Transverse colon (tissue), 4 donors: ENCODE measurements at regions of chr6 and their contacts with region 1.

Region 1: DNA sequence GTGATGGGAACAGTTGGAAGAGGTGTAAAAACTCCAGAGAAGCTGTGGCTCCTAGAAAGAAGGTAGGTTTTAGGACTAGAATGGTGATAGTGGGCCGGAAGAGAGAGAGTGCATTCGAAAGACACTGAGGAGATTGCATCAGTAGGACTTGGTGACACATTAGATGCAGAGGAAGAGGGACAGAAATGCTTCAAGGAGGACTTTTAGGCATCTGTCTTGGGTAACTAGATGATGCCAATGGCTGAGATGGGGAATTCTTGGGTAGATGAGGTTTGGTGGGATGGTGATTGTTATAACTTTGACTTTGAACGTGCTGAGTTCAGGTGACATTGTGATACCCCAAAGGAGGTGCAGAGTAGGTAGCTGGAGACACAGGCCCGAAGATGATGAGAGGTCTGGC is 196.5 kb downstream of the GMPR start:
- DNase-seq: no peak
- H3K4me3 ChIP-seq: no peak overlapping the region
- H3K27ac ChIP-seq: no peak overlapping the region
- H3K4me1 ChIP-seq: peaks cover 9 to 44% (median 14%) of the 10 kb centered on the region in 4 donors
- H3K27me3 ChIP-seq: no peaks in the 10 kb centered on the region
- CTCF ChIP-seq: no peak
- EP300 ChIP-seq: no peak
- POLR2A ChIP-seq: no peak

Region 2: DNA sequence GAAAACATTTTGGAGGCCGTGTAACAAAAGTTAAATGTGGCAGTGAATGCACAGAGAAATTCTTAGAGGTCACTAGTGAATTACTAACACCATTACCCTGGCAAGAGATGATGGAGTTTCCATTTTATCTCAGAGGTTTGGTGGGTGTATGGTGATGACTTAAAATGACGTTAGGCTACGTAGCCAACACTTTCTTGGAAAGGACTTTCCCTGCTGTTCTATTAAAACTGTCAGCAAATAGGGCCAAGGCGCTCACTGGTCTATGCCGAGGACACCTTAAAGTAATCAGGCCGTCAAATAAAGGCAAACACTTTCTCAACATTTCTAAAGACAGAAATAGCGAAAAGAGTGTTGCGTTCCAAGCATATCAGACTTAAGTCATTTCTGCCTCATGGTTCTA is 35.7 kb before region 1 on chr6:
- in situ Hi-C with region 1: no loop called
- intact Hi-C with region 1: loop called (anchors 1 kb)
- DNase-seq: no peak
- H3K4me3 ChIP-seq: no peak overlapping the region
- H3K27ac ChIP-seq: peak overlapping the region in 3 of 4 donors; percentile 47 to 59 (median 52)
- H3K4me1 ChIP-seq: peaks cover 3 to 23% (median 6%) of the 10 kb centered on the region in 4 donors
- H3K27me3 ChIP-seq: no peaks in the 10 kb centered on the region
- CTCF ChIP-seq: no peak
- EP300 ChIP-seq: no peak
- POLR2A ChIP-seq: no peak

Region 3: DNA sequence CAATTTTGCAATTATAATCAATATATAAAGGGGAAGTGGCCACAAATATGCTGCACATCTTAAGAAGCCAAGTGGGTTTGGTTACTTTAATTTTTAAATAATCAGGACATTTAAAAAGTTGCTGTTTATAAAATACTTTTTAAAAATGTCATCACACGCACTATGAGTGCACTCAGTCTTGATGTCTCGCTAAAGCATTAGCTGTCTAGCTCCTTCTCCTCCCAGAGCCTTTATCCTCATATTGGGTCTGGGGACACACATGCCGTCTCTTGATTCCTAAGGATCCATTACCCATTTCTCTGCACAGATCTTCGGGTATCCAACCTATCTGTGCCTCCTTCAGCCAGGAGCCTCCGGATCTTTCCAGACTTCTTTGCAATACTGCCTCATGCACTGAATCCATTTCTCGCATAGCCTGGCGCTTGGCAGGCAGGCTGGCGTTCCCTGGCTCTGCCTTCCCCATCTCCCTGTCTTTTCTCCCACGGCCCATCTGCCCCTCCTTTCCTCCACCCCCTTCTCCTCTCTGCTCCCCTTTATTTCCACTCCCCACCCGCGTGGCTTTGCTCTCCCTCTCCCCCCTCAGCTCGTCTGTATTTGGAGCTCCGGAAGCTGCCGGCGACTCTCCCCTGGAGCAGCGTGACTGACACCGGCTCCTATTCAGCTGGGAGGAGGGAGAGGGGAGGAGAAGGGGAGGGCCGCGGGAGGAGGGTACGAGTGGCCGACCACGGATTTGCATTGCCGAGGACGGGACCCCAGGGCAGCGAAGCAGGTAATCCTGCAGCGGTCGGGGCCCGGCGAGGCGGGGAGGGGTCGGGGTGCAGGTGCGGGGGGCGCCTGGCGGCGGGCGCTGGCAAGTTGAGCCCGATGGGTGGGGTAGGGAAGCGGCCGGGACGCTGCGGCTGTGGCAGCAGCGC is 958.4 kb after region 1 on chr6 and contains the start of gene CAP2:
- in situ Hi-C with region 1: no loop called
- intact Hi-C with region 1: no loop called
- DNase-seq: peak; percentile 62
- H3K4me3 ChIP-seq: peak within 1 kb of the TSS; percentile 64 to 93 (median 78)
- H3K27ac ChIP-seq: peak within 1 kb of the TSS; percentile 75 to 90 (median 90)
- H3K4me1 ChIP-seq: peaks cover 0 to 23% (median 5%) of the 10 kb centered on the region in 4 donors
- H3K27me3 ChIP-seq: peaks cover 6% of the 10 kb centered on the region
- CTCF ChIP-seq: no peak
- EP300 ChIP-seq: no peak
- POLR2A ChIP-seq: peak; percentile 8
- total RNA-seq, gene CAP2: 4.8 to 10.1 (median 7.8) TPM